ENCODE measurements at regions of chr3 and their contacts with region 1.

Region 1: GRCh38 chr3:40366203-40367162 is 20.5 kb upstream of the ENTPD3 start:
- DNase-seq: peak; percentile 47
- H3K4me3 Mint-ChIP-seq: no peak overlapping the region
- H3K27ac Mint-ChIP-seq: peak overlapping the region; percentile 72
- H3K4me1 Mint-ChIP-seq: no peaks in the 10 kb centered on the region
- H3K27me3 Mint-ChIP-seq: no peaks in the 10 kb centered on the region
- CTCF ChIP-seq: no peak

Region 2: GRCh38 chr3:40414270-40414669 is 47.8 kb after region 1 on chr3:
- CTCF ChIA-PET with region 1: no interaction called
- POLR2A ChIA-PET with region 1: interaction called, 3 read pairs
- intact Hi-C with region 1: loop called (anchors 5 kb)
- DNase-seq: no peak
- H3K4me3 Mint-ChIP-seq: no peak overlapping the region
- H3K27ac Mint-ChIP-seq: no peak overlapping the region
- H3K4me1 Mint-ChIP-seq: peaks cover 6% of the 10 kb centered on the region
- H3K27me3 Mint-ChIP-seq: no peaks in the 10 kb centered on the region
- CTCF ChIP-seq: no peak